ENCODE measurements at regions of chr3 and their contacts with region 1.

Region 1: GRCh38 chr3:149657926-149658733 is at the start of gene WWTR1:
- DNase-seq: peak; percentile 93
- ATAC-seq: peak; percentile 81
- H3K4me3 ChIP-seq: peak within 1 kb of the TSS; percentile 92 to 94 (median 93)
- H3K27ac ChIP-seq: peak within 1 kb of the TSS; percentile 79
- H3K4me1 ChIP-seq: peaks cover 58% of the 10 kb centered on the region
- H3K27me3 ChIP-seq: no peaks in the 10 kb centered on the region; a peak in 1 of 5 replicates
- CTCF ChIP-seq: peak; percentile 54; the same call in 1 of the 2 replicates
- EP300 ChIP-seq: peak in 1 of 2 experiments; percentile 4; a peak in 1 of 4 replicates
- POLR2A ChIP-seq: peak; percentile 81 to 89
- RAD21 ChIP-seq: peak; percentile 78; the same call in 1 of the 2 replicates
- total RNA-seq, gene WWTR1: 19.7 and 27.0 TPM in 2 replicates

Region 2: DNA sequence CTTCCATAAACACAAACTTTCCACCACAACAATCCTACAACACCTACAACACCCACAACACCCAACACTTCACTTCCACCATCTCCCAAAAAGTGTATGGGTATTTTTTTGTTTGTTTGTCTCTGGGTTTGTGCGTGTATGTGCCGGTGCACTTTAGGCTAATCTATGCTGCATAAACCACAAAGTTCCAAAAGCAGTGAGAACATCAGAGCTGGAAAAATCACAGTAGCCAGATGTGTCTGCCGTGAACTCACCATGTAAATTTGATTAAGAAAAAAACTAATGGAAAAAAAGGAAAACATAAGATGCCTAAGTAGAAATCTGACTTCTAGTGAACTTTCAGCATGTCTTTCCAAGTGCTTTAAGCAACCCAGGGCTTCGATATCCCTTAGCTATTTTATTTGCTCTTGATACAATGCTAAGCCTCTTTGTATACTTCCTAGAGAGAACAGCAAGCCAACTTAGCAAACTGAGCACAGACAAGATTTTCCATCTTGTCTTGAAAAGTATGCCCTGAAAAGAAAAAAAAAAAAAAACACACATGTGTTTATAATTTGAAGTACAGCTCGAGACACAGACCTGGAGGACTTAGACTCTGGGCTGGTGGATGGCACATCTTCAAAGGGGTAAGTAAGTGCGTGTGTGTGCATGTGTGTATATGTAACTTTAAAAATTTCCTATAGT is 91.7 kb before region 1 on chr3:
- CTCF ChIA-PET with region 1: interaction called, 4 read pairs
- POLR2A ChIA-PET with region 1: interaction called, 9 read pairs
- in situ Hi-C with region 1: no loop called
- intact Hi-C with region 1: loop called (anchors 5 kb)
- DNase-seq: no peak
- ATAC-seq: no peak
- H3K4me3 ChIP-seq: no peak overlapping the region
- H3K27ac ChIP-seq: no peak overlapping the region
- H3K4me1 ChIP-seq: no peaks in the 10 kb centered on the region
- H3K27me3 ChIP-seq: no peaks in the 10 kb centered on the region
- CTCF ChIP-seq: no peak
- EP300 ChIP-seq: no peak
- POLR2A ChIP-seq: no peak
- RAD21 ChIP-seq: no peak

Region 3: GRCh38 chr3:149640976-149641728 is 17.0 kb before region 1 on chr3:
- CTCF ChIA-PET with region 1: no interaction called
- POLR2A ChIA-PET with region 1: interaction called, 28 read pairs
- in situ Hi-C with region 1: no loop called
- intact Hi-C with region 1: no loop called
- DNase-seq: peak; percentile 64
- ATAC-seq: peak; percentile 85
- H3K4me3 ChIP-seq: peak overlapping the region in 1 of 3 experiments; percentile 31; a peak in 1 of 6 replicates
- H3K27ac ChIP-seq: peak overlapping the region; percentile 86
- H3K4me1 ChIP-seq: peaks cover 98% of the 10 kb centered on the region
- H3K27me3 ChIP-seq: no peaks in the 10 kb centered on the region
- CTCF ChIP-seq: no peak
- EP300 ChIP-seq: no peak
- POLR2A ChIP-seq: no peak
- RAD21 ChIP-seq: no peak

Region 4: DNA sequence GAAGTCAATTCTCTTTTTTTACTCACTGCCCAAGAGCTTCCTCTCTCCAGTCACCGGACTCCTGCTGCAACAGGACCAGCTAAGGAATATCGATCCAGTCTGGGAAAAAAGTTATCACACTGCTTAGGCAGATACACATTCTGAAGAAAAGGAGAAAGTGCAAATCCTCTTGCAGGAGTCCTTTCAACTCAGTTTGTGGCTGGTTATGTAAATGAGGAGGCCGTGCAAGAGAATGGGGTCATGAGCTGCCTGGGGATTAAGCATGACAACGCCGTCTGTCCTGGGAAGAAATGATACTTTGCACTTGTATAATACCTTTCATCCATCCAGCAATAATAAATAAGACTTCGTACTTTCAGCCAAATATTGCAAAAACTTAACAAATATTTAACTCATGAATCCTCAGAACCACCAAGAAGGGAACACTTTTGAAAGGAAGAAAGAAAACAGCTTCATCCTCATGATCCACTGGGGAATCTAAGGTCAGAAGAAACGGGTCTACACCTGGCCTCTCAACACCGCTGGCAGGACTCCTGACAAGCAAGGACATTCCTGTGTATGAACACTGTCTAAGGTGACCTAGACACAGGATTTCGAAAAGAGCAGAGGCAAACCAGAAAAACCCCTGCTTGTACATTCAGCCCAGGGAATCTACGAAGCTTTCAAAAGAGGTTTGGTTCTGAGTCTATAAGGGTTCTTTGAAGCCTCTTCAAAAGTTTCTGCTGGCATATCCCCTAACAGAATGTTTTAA is 12.8 kb after region 1 on chr3:
- CTCF ChIA-PET with region 1: no interaction called
- POLR2A ChIA-PET with region 1: interaction called, 59 read pairs
- in situ Hi-C with region 1: no loop called
- intact Hi-C with region 1: no loop called
- DNase-seq: peak; percentile 47
- ATAC-seq: peak; percentile 79
- H3K4me3 ChIP-seq: peak overlapping the region; percentile 64 to 71 (median 65)
- H3K27ac ChIP-seq: peak overlapping the region; percentile 52
- H3K4me1 ChIP-seq: peaks cover 25% of the 10 kb centered on the region
- H3K27me3 ChIP-seq: no peaks in the 10 kb centered on the region
- CTCF ChIP-seq: 0 out of 2 replicates have a peak, but pooled peaks have one; percentile 4
- EP300 ChIP-seq: peak in 1 of 2 experiments; percentile 42; a peak in 1 of 4 replicates
- POLR2A ChIP-seq: no peak
- RAD21 ChIP-seq: no peak

Region 5: GRCh38 chr3:149752051-149752787 is 94.1 kb after region 1 on chr3 and contains the start of gene COMMD2:
- CTCF ChIA-PET with region 1: no interaction called
- POLR2A ChIA-PET with region 1: interaction called, 3 read pairs
- in situ Hi-C with region 1: no loop called
- intact Hi-C with region 1: loop called (anchors 1 kb)
- DNase-seq: peak; percentile 90
- ATAC-seq: peak; percentile 100
- H3K4me3 ChIP-seq: peak within 1 kb of the TSS; percentile 88 to 99 (median 97)
- H3K27ac ChIP-seq: peak within 1 kb of the TSS; percentile 67
- H3K4me1 ChIP-seq: peaks cover 25% of the 10 kb centered on the region
- H3K27me3 ChIP-seq: no peaks in the 10 kb centered on the region; a peak in 1 of 5 replicates
- CTCF ChIP-seq: peak; percentile 70
- EP300 ChIP-seq: peak; percentile 29 to 60; a peak in 2 of 4 replicates
- POLR2A ChIP-seq: peak; percentile 79 to 89
- RAD21 ChIP-seq: no peak; the same call in 1 of the 2 replicates
- total RNA-seq, gene COMMD2: 57.6 and 73.2 TPM in 2 replicates

Measured in HepG2 (cell line).